Pancreas (tissue), 10 donors: ENCODE measurements at regions of chr1 and their contacts with region 1.

Region 1: DNA sequence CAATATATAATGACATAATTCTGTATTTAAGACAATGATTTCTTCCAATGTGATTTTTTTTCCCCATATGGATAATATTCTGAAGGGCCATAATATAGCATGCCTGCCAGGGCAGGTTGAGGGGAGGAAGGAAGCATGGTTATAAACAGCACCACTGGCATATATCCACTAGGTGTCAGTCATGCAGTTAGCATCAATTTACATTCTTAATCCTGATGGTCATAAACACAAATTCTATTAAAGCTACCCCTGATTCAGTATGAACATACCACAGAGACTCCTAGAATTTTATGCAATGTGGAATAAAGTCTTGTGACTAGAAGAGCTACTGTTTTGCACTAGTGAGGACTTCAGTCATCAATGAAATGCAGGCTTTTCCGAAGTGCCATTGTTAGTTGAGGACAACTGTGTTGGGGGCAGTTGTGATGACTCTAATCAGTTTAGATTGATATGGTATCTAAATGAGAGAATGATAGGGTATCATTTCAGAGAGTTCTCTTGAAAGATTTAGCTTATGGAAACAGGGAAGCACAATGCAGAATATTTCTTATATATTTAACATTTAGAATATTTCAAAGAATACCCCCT is 342.7 kb upstream of the NR5A2 start:
- DNase-seq: peak in 4 of 6 donors; percentile 24 to 55 (median 36)
- ATAC-seq: peak; percentile 93 to 96 (median 94)
- H3K4me3 ChIP-seq: no peak overlapping the region
- H3K27ac ChIP-seq: no peak overlapping the region
- H3K4me1 ChIP-seq: peaks cover 9 to 16% (median 12%) of the 10 kb centered on the region in 3 donors
- H3K27me3 ChIP-seq: no peaks in the 10 kb centered on the region
- CTCF ChIP-seq: peak; percentile 65 to 79 (median 74)

Region 2: DNA sequence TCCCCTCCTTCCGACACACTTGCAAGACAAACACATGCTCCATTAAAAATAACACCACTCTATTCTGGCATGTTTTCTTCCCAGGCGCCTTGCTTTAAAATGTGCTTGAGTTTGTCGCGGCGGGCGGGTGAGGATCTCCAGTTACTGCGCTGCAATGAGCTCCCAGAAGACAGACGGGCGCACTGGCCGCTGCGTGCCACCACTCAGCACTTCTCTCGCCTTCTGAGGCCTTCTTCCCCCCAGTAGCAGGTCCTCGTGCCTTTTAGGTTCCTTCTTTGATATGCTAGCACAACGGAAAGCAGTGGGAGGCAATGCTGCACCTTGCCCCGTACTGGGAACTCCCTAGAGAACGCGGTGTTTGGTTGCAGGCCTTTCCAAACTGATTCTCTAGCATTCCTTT is 63.2 kb after region 1 on chr1:
- intact Hi-C with region 1: no loop called
- DNase-seq: no peak
- ATAC-seq: no peak
- H3K4me3 ChIP-seq: no peak overlapping the region
- H3K27ac ChIP-seq: no peak overlapping the region
- H3K4me1 ChIP-seq: no peaks in the 10 kb centered on the region
- H3K27me3 ChIP-seq: no peaks in the 10 kb centered on the region
- CTCF ChIP-seq: no peak

Region 3: DNA sequence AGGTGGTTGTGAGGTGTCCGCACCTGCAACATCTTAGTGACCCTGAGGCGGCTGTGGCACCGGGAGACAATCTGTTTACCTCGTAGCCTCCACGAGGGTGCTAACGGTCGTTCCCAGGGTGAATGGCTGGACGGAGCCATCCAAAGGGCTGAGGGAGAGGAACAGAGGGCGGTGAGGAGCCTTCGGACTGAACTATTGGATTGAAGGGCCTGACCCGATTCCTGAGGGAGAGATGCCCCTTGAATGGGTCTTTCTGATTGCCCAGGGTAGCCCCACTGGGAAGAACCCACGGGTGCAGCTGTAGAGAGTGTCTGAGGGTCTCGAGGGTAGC is 345.0 kb after region 1 on chr1:
- intact Hi-C with region 1: no loop called
- DNase-seq: peak in 2 of 6 donors; percentile 25 to 65
- ATAC-seq: peak in 3 of 4 donors; percentile 1 to 7 (median 1)
- H3K4me3 ChIP-seq: peak overlapping the region; percentile 44 to 75 (median 65)
- H3K27ac ChIP-seq: peak overlapping the region; percentile 70 to 99 (median 90)
- H3K4me1 ChIP-seq: peaks cover 5 to 28% (median 21%) of the 10 kb centered on the region in 3 donors
- H3K27me3 ChIP-seq: no peaks in the 10 kb centered on the region
- CTCF ChIP-seq: no peak

Region 4: DNA sequence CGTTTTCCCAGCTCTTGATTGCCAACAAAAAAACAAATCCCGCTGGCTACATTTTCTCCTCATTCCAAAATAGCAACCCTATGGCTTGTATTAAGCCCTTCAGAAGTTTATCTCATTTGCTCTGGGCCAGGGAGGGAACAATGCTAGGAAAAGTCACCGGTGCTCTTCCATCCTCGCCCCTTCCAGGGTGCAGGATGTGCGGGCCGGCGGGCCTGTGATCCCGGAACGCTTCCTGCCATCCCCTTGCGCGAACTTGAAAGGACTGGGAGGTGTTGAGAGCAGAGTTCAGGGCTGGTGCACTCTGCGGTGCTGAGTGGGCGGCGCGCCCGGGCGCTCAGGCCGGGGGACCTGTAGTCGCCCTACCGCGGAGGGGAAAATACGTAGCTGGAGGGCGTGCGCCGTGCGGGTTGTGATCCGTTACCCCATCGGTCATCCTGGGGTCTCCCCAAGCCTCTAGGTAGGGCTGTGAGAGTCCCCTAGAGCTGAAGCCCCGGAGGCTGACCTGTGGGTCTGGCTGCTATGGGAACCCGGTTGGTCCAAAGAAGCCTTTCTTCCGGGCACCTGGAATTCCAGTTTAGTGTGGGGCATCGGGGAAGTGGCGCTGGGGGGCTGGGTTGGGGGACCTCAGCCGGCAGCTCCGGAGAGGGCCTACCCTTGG is 355.8 kb after region 1 on chr1:
- intact Hi-C with region 1: loop called in 1 of 3 experiments (anchors 10 kb)
- DNase-seq: peak; percentile 38 to 84 (median 66)
- ATAC-seq: peak; percentile 6 to 40 (median 12)
- H3K4me3 ChIP-seq: peak overlapping the region; percentile 47 to 72 (median 56)
- H3K27ac ChIP-seq: peak overlapping the region; percentile 81 to 99 (median 90)
- H3K4me1 ChIP-seq: peaks cover 0 to under 1% (median 0%) of the 10 kb centered on the region in 3 donors
- H3K27me3 ChIP-seq: no peaks in the 10 kb centered on the region
- CTCF ChIP-seq: no peak

Region 5: GRCh38 chr1:200506471-200506870 is 821.7 kb after region 1 on chr1:
- intact Hi-C with region 1: loop called in 1 of 3 experiments (anchors 10 kb)
- DNase-seq: no peak
- ATAC-seq: no peak
- H3K4me3 ChIP-seq: no peak overlapping the region
- H3K27ac ChIP-seq: no peak overlapping the region
- H3K4me1 ChIP-seq: no peaks in the 10 kb centered on the region
- H3K27me3 ChIP-seq: no peaks in the 10 kb centered on the region
- CTCF ChIP-seq: no peak